Activated T-helper 1 cell treated with anti-CD3 and anti-CD28 coated beads, Interleukin-12 subunit alpha, Interleukin-12 subunit beta, Interleukin-2, Interleukin-4 antibody, amounts not matched to agents 30 ng/mL and 10 ng/mL and 1 ng/mL, durations not matched to agents 14 hours and 24 hours and 36 hours (primary cell): ENCODE measurements at regions of chr12 and their contacts with region 1.

Region 1: DNA sequence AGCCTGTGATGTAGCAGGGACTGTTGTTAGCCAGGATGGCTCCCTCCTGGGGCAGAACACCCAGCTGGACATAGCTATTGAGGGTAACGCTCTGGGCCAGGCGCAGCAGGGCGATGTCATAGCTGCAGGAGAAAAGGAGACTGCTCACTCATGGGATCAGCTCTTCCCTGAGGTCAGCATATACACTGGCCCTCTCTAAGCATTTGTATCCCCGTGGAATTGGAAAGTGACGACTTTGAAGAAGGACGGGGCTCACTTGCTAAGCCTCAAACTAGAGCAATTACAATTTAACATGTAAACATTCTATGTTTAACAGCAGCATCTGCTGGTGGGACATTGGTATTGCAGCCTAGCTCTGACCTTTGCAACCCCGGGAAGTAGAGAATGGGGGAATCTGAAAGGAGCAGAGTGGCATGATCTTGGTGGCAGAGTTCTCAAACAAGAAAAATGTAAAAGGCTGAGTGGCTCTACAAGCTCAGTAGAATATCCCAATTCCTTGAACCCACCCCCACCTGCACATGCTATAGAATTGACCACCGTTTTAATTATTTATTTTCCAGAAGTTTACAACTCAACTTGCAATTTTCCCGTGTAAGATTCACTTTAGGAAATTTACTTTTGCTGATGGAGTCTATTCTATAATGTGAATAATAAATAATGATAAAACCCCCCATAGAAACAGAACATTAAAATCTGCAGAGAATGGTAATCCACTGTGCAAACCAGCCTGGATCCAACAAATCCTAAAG is 5.0 kb downstream of the CELA1 start:
- DNase-seq: peak; percentile 63
- H3K4me3 Mint-ChIP-seq: no peak overlapping the region
- H3K27ac Mint-ChIP-seq: no peak overlapping the region
- H3K4me1 Mint-ChIP-seq: peaks cover 12% of the 10 kb centered on the region
- H3K27me3 Mint-ChIP-seq: peaks cover 6% of the 10 kb centered on the region

Region 2: DNA sequence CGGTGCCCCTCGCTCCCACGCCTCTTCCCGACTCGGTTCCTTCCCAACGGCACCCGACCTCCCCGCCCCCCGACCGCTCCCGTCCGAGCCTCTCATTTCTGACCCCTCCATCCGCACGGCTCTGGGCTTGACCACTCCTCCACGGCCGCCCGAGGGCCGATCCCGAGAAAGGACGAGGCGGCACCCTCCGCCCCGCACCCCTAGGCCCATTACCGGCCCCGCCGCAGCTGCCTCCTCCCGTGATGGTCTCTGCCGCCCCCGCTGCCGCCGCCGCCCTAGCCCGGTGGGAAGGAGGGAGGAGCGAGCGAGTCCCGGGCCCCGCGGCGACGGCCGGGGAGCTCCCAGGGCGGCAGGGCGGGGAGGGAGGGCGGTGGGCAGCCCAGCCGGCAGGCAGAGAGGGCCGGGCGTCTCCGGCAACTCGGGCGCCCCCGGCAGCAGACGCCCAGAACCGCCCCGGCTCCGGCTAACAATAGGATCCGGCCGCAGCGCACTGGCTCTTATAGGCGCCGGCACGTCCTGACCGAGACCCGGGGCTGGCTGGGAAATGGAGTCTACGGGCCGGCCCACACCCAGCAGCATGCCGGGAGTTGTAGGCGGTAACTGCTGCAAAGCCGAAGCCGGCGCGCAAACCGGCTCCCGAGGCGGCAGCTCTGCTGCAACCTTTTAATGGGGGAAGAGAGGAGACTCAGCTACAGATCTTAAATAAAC is 258.2 kb before region 1 on chr12 and contains the start of gene CSRNP2:
- intact Hi-C with region 1: loop called (anchors 1 kb)
- DNase-seq: peak; percentile 94
- H3K4me3 Mint-ChIP-seq: peak within 1 kb of the TSS; percentile 99
- H3K27ac Mint-ChIP-seq: peak within 1 kb of the TSS; percentile 91
- H3K4me1 Mint-ChIP-seq: peaks cover 34% of the 10 kb centered on the region
- H3K27me3 Mint-ChIP-seq: peaks cover 3% of the 10 kb centered on the region
- total RNA-seq, gene CSRNP2: 28.6 and 35.2 TPM in 2 replicates

Region 3: DNA sequence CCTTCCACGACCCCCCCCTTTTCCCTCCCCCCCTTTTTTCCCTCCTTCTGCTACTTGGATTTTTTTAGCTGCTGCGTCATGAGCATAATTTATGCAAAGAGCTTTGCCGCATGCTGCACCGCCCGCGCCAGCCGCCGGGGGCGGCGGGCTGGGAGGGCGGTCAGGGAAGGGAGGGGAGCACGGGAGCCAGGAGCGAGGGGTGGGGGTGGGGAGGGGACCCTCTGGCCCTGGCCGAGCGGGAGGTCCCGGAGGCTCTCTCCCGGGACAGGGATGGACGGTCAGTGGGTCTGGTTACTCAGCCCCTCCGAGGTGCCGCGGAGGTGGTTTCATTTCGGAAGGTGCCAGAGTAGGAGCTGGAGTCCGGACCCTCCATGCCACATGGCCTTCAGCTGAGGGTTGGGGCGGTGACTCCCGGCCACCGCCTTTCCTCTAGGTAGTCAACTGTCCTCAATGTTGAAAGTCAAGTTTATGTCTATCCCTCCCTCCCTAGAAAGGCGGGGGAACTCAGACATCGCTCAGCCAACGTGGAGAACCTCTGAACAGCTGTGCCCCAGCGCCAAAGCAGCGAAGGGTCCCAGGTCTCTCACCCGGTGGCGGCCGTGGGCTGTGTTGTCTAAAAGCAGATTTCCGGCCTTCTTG is 123.3 kb before region 1 on chr12 and contains the start of gene POU6F1:
- intact Hi-C with region 1: loop called (anchors 1 kb)
- DNase-seq: peak; percentile 60
- H3K4me3 Mint-ChIP-seq: peak within 1 kb of the TSS; percentile 76
- H3K27ac Mint-ChIP-seq: peak within 1 kb of the TSS; percentile 56
- H3K4me1 Mint-ChIP-seq: peaks cover 21% of the 10 kb centered on the region
- H3K27me3 Mint-ChIP-seq: no peaks in the 10 kb centered on the region
- total RNA-seq, gene POU6F1: 5.2 and 6.7 TPM in 2 replicates

Region 4: DNA sequence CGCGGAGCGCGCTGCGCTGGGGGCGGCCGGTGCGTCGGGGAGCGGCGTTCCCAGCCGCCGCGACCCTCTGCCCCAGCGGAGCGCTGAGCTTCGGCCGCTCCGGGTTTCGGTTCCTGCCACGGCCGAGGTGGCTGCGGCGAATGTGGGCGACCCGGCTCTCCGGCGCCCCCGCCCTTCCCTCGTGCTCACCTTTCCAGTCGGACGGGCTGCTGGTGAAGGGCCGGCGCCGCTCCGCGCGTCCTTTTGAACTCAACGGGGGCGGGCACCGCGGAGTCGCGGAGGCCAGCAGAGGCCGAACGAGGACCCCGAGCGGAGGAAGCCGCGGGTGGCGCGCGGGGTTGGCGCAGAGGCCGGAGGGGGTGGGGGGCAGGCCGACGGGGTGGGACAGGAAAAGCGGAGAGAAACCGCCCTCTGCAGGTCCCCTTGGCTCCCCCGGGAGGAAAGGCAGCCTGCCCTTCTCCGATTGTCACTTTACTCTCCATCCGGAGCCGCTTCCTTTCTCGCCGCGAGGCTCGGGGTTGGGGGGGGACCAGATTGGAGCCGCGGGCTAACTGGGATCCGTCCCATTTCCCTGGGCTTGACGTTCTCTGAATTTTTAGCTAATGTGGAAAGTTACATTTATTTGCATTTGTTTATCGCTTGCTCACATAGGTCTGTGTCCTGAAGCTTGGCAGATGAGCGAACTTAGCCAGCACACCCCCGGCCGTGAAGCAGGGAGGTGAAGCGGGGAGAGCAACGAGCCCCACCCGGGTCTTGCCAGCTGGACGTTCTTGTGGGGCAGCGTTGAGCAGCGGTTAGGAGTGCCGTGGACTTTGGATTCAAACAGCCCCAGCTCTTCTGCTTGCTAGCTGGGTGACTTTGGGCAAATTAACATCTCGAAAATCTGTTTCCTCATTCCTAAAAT is 71.1 kb before region 1 on chr12 and contains the start of gene SMAGP:
- intact Hi-C with region 1: loop called (anchors 1 kb)
- DNase-seq: peak; percentile 33
- H3K4me3 Mint-ChIP-seq: peak within 1 kb of the TSS; percentile 88
- H3K27ac Mint-ChIP-seq: peak within 1 kb of the TSS; percentile 68
- H3K4me1 Mint-ChIP-seq: peaks cover 14% of the 10 kb centered on the region
- H3K27me3 Mint-ChIP-seq: peaks cover 30% of the 10 kb centered on the region
- total RNA-seq, gene SMAGP: 0.16 TPM in 1 of 2 replicates, not detected in the other

Region 5: DNA sequence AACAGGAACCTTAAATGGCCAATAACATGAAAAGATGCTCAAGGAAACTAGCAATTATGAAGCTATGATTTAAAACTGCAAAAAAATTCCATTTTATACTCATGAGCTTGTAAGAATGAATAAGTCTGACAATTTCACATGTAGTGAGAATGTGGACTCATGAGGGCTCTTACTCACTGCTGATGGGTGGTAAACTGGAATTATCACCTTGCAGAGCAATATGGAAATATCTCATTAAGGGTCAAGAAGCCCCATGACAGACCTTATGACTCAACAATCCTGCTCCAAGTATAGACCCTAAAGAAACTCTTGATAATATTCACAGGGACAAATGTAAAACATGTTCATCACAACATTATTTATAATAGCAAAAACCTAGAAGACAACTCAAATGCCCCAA is 47.7 kb before region 1 on chr12:
- intact Hi-C with region 1: no loop called
- DNase-seq: no peak
- H3K4me3 Mint-ChIP-seq: no peak overlapping the region
- H3K27ac Mint-ChIP-seq: peak overlapping the region; percentile 86
- H3K4me1 Mint-ChIP-seq: peaks cover 5% of the 10 kb centered on the region
- H3K27me3 Mint-ChIP-seq: no peaks in the 10 kb centered on the region

Region 6: GRCh38 chr12:51307655-51308593 is 33.5 kb before region 1 on chr12:
- intact Hi-C with region 1: loop called (anchors 5 kb)
- DNase-seq: no peak
- H3K4me3 Mint-ChIP-seq: no peak overlapping the region
- H3K27ac Mint-ChIP-seq: peak overlapping the region; percentile 21
- H3K4me1 Mint-ChIP-seq: peaks cover 23% of the 10 kb centered on the region
- H3K27me3 Mint-ChIP-seq: no peaks in the 10 kb centered on the region